ENCODE measurements at regions of chr4 and their contacts with region 1.

Region 1: GRCh38 chr4:182806259-182807252 is 110.6 kb downstream of the DCTD start:
- DNase-seq: peak; percentile 52 to 96 (median 79)

Region 2: GRCh38 chr4:181143250-181143854 is 1663.2 kb before region 1 on chr4:
- intact Hi-C with region 1: loop called (anchors 2 kb)
- DNase-seq: peak; percentile 77 to 97 (median 86)

Region 3: DNA sequence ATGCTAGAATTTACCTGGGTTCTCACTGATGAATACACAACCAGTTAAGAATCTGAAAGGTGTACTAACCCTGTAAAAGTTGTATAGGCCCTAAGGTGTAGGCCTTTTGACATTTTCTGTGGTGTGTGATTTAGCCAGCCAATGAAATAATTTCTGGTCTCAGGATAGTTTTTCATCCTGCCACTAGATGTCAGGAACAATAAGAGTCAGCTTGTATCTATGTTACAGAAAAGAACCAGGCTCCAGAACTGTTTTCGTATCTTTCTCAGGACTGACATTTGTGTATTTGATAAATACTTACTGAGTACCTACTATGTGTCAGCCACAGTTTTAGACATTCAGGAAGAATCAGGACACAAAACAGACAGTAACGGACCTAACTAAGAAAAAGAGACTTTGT is 1237.0 kb before region 1 on chr4:
- intact Hi-C with region 1: loop called (anchors 5 kb)
- DNase-seq: no peak

Region 4: GRCh38 chr4:182478475-182478874 is 328.1 kb before region 1 on chr4:
- intact Hi-C with region 1: loop called (anchors 2 kb)
- DNase-seq: no peak

Region 5: GRCh38 chr4:182917182-182918043 is 110.9 kb after region 1 on chr4 and contains the start of gene DCTD:
- intact Hi-C with region 1: loop called (anchors 10 kb)
- DNase-seq: peak; percentile 58 to 94 (median 68)

Region 6: GRCh38 chr4:182975806-182976205 is 169.2 kb after region 1 on chr4:
- intact Hi-C with region 1: no loop called
- DNase-seq: no peak